ENCODE measurements at regions of chr1 and their contacts with region 1.

Region 1: DNA sequence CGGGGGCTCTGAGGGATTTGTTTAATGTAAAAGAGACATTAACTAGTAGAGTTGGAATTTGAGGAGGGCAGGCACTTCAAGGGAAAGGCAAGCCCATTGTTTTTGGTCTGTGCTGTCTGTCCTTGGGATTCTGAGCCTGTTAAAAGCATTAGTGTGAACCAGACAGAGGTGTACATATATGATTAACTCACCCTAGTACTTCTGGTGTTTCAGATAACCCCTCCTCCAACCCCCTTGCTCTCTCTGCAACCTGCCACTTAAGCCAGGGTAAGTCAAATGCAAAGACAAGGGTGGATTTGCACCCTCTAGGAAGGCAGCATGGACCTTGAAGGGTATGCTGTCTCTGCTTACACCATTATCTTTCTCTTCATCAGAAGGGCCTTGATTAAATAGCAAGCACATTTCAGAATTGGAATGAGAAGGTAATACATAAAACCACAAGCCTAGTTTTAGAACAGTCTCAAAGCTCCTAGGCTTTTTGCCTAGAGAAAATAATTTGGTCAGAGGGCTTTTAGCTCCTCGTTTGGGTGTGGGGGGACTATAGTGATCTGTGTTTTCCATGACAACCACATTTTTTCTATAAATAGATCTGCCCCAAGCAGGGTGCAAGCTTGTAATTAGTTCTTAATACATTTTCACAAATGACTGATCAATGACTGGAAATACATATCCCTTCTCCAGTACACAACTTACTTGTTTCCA is 120.7 kb upstream of the SGIP1 start:
- DNase-seq: no peak
- ATAC-seq: peak; percentile 86
- H3K4me3 ChIP-seq: no peak overlapping the region
- H3K27ac ChIP-seq: no peak overlapping the region
- H3K4me1 ChIP-seq: no peaks in the 10 kb centered on the region; the same call in 1 of the 2 replicates
- H3K27me3 ChIP-seq: no peaks in the 10 kb centered on the region
- CTCF ChIP-seq: no peak
- EP300 ChIP-seq: no peak
- POLR2A ChIP-seq: no peak
- RAD21 ChIP-seq: no peak

Region 2: GRCh38 chr1:66402194-66402593 is 11.1 kb before region 1 on chr1:
- CTCF ChIA-PET with region 1: interaction called, 3 read pairs
- POLR2A ChIA-PET with region 1: interaction called, 4 read pairs
- RAD21 ChIA-PET with region 1: interaction called, 5 read pairs
- SMC1A ChIA-PET with region 1: interaction called, 21 read pairs
- in situ Hi-C with region 1: no loop called
- intact Hi-C with region 1: no loop called
- DNase-seq: peak; percentile 87
- ATAC-seq: peak; percentile 76
- H3K4me3 ChIP-seq: no peak overlapping the region
- H3K27ac ChIP-seq: peak overlapping the region; percentile 77
- H3K4me1 ChIP-seq: peaks cover 58% of the 10 kb centered on the region
- H3K27me3 ChIP-seq: no peaks in the 10 kb centered on the region
- CTCF ChIP-seq: no peak
- EP300 ChIP-seq: peak; percentile 88 to 95; a peak in 3 of 4 replicates
- POLR2A ChIP-seq: 0 out of 2 replicates have a peak, but pooled peaks have one; percentile 42
- RAD21 ChIP-seq: no peak